Transverse colon (tissue), 4 donors: ENCODE measurements at regions of chr4 and their contacts with region 1.

Region 1: GRCh38 chr4:45621926-45622325 is 501.9 kb downstream of the GABRG1 start:
- DNase-seq: no peak
- H3K4me3 ChIP-seq: no peak overlapping the region
- H3K27ac ChIP-seq: no peak overlapping the region
- H3K4me1 ChIP-seq: no peaks in the 10 kb centered on the region
- H3K27me3 ChIP-seq: no peaks in the 10 kb centered on the region
- CTCF ChIP-seq: no peak
- EP300 ChIP-seq: no peak
- POLR2A ChIP-seq: no peak

Region 2: GRCh38 chr4:44646151-44646550 is 975.8 kb before region 1 on chr4:
- in situ Hi-C with region 1: no loop called
- intact Hi-C with region 1: loop called (anchors 5 kb)
- DNase-seq: no peak
- H3K4me3 ChIP-seq: no peak overlapping the region
- H3K27ac ChIP-seq: no peak overlapping the region
- H3K4me1 ChIP-seq: no peaks in the 10 kb centered on the region
- H3K27me3 ChIP-seq: no peaks in the 10 kb centered on the region
- CTCF ChIP-seq: no peak
- EP300 ChIP-seq: no peak
- POLR2A ChIP-seq: no peak

Region 3: DNA sequence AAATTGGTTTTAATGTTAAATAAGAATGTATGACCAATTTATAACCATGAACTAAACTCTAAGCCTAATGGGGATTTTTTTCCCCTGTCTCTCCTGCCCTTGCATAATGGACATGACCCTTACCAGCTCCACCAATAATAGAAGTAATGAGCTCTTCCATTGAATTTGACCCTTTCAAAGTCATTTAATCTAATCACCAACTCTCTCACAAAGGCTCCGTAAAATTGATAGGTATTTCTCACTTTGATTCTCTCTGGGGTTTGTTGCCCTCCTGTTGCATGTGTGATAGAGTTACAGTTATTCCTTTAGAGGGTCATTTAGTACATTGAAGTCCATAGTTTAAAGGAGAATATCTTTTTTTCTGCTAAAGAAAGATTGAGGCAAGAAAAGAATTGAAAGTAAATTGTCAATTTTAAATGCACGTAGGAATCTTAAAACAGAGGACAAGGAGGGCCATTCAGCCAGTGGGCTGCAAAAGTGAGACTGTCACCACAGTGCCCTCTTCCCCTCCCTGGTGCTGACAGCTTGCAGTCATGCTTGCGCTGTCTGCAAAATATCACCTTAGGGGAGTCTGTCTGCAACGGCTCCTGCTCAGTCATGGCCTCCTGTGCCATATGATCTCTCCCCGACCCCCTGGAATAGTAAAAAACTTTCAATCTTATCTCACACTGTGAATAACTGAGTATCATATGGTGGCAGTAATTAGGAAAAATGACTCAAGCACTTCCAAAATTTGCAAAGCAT is 588.1 kb before region 1 on chr4:
- in situ Hi-C with region 1: no loop called
- intact Hi-C with region 1: no loop called
- DNase-seq: no peak
- H3K4me3 ChIP-seq: no peak overlapping the region
- H3K27ac ChIP-seq: no peak overlapping the region
- H3K4me1 ChIP-seq: no peaks in the 10 kb centered on the region
- H3K27me3 ChIP-seq: no peaks in the 10 kb centered on the region
- CTCF ChIP-seq: no peak
- EP300 ChIP-seq: no peak
- POLR2A ChIP-seq: no peak